Breast epithelium (tissue), 4 donors: ENCODE measurements at regions of chr6 and their contacts with region 1.

Region 1: DNA sequence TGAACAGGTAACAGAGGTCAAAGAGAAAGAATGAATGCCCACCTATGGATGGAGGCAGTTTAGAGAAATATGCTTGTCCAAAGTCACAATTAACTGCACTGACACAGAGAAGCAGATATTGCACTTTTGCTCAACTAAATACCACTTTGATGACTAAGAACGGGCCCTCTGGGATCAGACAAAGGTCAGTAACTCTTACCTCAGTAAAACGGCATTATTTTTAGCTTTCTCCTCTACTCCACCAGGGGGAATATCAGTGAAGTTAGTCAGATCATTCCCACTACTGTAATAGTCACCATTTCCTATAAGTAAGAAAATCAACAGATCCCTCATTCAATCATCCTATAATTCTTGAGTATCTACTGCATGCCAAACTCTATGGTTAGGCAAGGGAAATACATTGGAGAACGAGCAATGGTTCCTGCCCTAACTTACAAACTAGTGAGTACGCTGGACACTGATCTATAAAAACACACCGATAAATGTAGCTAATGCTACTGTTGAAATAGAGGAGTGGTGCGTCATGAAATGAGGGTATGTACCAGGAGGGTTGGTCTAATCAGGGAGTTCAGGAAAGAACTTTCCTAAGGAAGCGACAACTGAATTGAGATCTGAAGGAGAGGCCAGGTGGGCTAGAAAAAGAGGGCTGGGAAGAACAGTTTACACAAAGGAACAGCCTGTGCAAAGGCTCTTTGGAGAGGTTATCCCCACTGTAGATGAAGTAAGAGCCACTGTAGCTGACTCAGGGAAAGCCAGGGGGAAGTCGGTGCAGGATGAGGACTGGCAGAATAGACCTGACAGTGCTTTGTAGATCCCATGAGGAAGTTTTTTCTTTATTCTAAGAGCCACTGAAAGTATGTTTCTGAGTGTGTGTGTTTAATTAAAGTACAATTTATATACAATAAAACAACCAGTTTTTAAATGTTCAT is 9.2 kb downstream of the ECI2 start:
- DNase-seq: no peak
- H3K4me3 ChIP-seq: no peak overlapping the region
- H3K27ac ChIP-seq: no peak overlapping the region
- H3K4me1 ChIP-seq: no peaks in the 10 kb centered on the region
- H3K27me3 ChIP-seq: no peaks in the 10 kb centered on the region
- CTCF ChIP-seq: no peak
- POLR2A ChIP-seq: no peak

Region 2: DNA sequence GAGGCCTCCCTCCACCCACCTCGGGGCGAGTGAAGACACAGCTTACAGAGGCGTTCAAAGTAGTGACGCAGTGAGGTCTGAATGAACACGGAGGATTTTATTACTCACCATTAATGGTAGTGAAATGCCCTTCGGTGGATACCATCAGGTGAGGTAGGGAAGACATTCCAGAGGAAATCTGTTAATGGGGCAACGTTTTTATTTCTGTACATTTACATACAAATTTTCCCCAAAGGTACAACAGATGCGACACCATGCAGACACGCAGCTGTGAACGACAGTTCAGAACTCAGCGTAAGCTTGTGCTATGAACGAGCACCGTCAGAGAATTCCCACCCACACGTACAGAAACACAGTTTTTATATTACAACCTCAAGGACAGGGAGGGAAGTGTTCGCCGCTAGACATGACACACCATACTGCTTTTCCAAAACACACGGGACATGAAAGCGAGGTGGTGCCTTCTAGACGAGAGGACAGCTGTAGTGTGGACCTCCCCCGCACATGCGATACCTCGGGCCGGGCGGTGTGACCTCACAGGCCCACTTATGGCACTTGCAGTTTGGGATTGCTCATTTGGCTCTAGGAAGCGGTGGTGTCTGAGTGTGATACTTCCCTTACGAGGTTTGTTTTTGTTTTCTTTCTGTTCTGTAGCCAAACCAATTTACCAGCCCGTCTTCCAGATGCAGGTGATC is 856.8 kb before region 1 on chr6:
- intact Hi-C with region 1: loop called (anchors 10 kb)
- DNase-seq: no peak
- H3K4me3 ChIP-seq: no peak overlapping the region
- H3K27ac ChIP-seq: no peak overlapping the region
- H3K4me1 ChIP-seq: no peaks in the 10 kb centered on the region
- H3K27me3 ChIP-seq: no peaks in the 10 kb centered on the region
- CTCF ChIP-seq: no peak
- POLR2A ChIP-seq: no peak

Region 3: GRCh38 chr6:4114123-4114522 is 12.1 kb before region 1 on chr6:
- intact Hi-C with region 1: loop called (anchors 1 kb)
- DNase-seq: no peak
- H3K4me3 ChIP-seq: no peak overlapping the region
- H3K27ac ChIP-seq: no peak overlapping the region
- H3K4me1 ChIP-seq: no peaks in the 10 kb centered on the region
- H3K27me3 ChIP-seq: no peaks in the 10 kb centered on the region
- CTCF ChIP-seq: no peak
- POLR2A ChIP-seq: no peak

Region 4: DNA sequence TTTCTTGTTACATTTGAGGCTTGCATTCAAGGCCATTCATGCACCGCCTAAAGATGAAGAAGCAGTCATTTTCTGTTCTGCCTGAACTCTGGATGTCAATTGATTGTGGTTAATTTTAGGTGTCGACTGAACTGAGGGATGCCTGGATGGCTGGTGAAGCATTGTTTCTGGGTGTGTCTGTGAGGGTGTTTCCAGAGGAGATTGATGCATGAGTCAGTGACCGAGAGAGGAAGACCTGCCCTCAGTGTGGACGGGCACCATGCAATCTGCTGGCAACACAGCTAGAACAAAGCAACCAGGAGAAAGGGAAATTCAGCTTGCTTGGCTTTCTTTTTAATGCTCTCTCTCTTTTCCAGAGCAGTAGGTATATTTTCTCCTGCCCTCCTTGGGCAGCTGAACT is 173.3 kb after region 1 on chr6:
- intact Hi-C with region 1: no loop called
- DNase-seq: no peak
- H3K4me3 ChIP-seq: no peak overlapping the region
- H3K27ac ChIP-seq: no peak overlapping the region
- H3K4me1 ChIP-seq: no peaks in the 10 kb centered on the region
- H3K27me3 ChIP-seq: no peaks in the 10 kb centered on the region
- CTCF ChIP-seq: no peak
- POLR2A ChIP-seq: no peak